ENCODE measurements at regions of chr18 and their contacts with region 1.

Region 1: DNA sequence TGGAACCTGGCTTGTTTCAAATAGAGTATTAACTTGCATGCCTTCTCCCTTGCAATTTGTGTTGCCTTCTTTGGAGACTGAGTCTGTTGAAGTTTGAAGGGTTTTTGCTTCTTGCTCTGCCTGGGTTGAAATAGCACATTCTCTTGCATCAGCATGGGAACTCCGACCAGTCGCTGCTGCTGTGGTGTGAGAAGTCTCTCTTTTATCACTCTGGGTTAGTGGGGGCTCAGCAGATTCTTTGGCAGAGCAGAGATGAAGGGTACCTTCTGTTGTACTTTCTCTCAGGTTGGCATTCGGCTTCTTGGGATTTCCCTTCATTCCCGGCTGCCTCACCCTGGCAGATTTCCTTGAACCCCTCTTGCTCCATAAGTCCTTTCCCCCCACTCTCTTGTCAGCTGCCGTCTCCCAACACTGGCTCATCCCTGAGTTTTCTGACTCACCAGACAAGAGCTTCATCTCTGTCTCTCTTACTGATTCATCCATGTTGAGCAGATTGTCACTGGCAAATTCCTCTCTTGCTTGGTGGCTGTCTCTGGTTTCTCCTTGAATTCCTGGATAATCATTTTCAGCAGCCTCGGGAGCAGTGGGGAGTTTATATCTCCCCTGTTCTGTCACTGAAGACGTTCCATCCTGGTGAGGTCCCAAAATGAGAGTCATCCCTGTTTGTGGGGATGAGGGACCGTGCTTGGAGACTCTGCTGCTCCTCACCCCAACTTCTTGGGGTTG is 49.9 kb downstream of the ALPK2 start:
- DNase-seq: peak in 2 of 9 donors; percentile 5 to 8
- ATAC-seq: no peak
- H3K4me3 ChIP-seq: no peak overlapping the region
- H3K4me3 Mint-ChIP-seq: peak overlapping the region in 8 of 10 donors; percentile 25 to 77 (median 48)
- H3K27ac ChIP-seq: no peak overlapping the region
- H3K27ac Mint-ChIP-seq: peak overlapping the region in 5 of 9 donors; percentile 10 to 61 (median 28)
- H3K4me1 ChIP-seq: peaks cover 0 to 8% of the 10 kb centered on the region in 2 donors
- H3K4me1 Mint-ChIP-seq: peaks cover 9 to 43% (median 32%) of the 10 kb centered on the region in 7 donors
- H3K27me3 ChIP-seq: no peaks in the 10 kb centered on the region
- H3K27me3 Mint-ChIP-seq: peaks cover 0 to 28% (median 0%) of the 10 kb centered on the region in 5 donors

Region 2: DNA sequence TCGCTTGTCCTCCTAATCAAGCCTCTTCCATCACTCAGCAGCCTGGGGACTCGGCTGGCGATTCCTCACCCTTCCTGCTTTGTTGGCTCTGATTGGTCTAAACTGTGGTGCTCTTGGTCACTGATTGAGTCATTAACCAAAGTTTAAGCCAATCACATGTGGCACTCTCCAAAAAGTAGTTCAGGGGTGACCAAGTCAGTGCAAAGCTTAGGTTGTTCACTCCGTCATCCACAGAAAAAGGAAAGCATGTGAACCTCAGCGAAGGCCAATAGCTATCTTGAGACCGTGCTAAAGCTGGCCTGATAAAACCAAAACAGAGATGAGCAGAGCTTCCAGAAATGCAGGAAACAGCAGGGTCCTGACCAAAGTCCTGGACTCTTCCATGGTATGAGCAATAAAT is 45.0 kb after region 1 on chr18:
- CTCF ChIA-PET with region 1: no interaction called
- POLR2A ChIA-PET with region 1: no interaction called
- intact Hi-C with region 1: loop called in 1 of 2 experiments (anchors 5 kb)
- DNase-seq: no peak
- ATAC-seq: no peak
- H3K4me3 ChIP-seq: no peak overlapping the region
- H3K4me3 Mint-ChIP-seq: no peak overlapping the region
- H3K27ac ChIP-seq: no peak overlapping the region
- H3K27ac Mint-ChIP-seq: no peak overlapping the region
- H3K4me1 ChIP-seq: peaks cover 0 to 5% of the 10 kb centered on the region in 2 donors
- H3K4me1 Mint-ChIP-seq: peaks cover 5 to 30% (median 18%) of the 10 kb centered on the region in 7 donors
- H3K27me3 ChIP-seq: no peaks in the 10 kb centered on the region
- H3K27me3 Mint-ChIP-seq: peaks cover 0 to 37% (median 0%) of the 10 kb centered on the region in 5 donors

Measured in naive thymus-derived CD4-positive, alpha-beta T cell (primary cell).